Activated CD4-positive, alpha-beta memory T cell treated with anti-CD3 and anti-CD28 coated beads, Interleukin-2, amount 10 ng/mL, durations not matched to agents 7 days and 5 days (primary cell): ENCODE measurements at regions of chr10 and their contacts with region 1.

Region 1: GRCh38 chr10:124719213-124719851 is 24.8 kb downstream of the FAM53B start:
- DNase-seq: peak; percentile 79
- H3K4me3 Mint-ChIP-seq: peak overlapping the region; percentile 72
- H3K27ac Mint-ChIP-seq: peak overlapping the region; percentile 92
- H3K4me1 Mint-ChIP-seq: peaks cover 94% of the 10 kb centered on the region
- H3K27me3 Mint-ChIP-seq: no peaks in the 10 kb centered on the region

Region 2: DNA sequence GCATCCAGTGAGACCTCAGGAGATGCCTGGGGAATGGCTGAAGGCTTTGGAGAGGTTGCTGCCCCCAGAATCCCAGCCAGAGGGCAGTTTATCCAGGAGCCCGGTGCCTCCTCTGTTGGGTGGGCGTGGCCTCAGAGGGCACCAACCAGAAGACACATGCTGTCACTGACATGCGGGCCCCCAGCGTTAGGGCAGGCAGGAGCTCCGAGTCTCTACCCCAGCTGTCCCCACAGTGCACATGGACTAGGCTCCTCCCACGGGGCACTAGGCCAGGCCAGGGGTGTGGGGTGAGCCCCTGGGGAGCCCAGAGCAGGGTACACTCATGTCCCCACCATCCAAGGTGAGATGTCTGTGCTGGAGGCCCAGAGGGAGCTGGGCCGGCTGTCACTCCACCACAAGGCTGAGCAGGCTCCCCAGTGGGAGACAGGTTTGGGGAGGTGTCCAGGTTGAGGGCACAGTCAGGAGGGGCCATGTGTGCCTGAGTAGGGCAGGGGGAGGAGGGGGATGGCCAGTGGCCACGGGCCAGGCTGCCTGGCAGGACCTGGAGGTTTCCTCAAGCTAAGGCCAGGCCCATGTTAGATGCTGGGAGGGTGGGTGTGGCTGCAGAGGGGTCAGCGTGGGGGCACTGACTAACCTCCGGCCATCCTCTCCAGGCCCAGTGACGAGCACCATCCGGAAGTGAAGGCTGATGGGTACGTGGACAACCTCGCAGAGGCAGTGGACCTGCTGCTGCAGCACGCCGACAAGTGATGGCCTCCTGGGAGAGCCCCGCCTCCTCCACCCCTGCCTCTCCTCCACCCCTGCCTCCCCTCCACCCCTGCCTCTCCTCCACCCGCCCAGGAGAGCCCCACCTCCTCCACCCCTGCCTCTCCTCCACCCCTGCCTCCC is 106.5 kb before region 1 on chr10:
- CTCF ChIA-PET with region 1: interaction called, 4 read pairs
- POLR2A ChIA-PET with region 1: interaction called, 10 read pairs
- DNase-seq: peak; percentile 25
- H3K4me3 Mint-ChIP-seq: no peak overlapping the region
- H3K27ac Mint-ChIP-seq: peak overlapping the region; percentile 38
- H3K4me1 Mint-ChIP-seq: peaks cover 49% of the 10 kb centered on the region
- H3K27me3 Mint-ChIP-seq: peaks cover 2% of the 10 kb centered on the region

Region 3: GRCh38 chr10:124641282-124642087 is 77.8 kb before region 1 on chr10:
- CTCF ChIA-PET with region 1: interaction called, 3 read pairs
- POLR2A ChIA-PET with region 1: interaction called, 89 read pairs
- DNase-seq: peak; percentile 59
- H3K4me3 Mint-ChIP-seq: peak overlapping the region; percentile 54
- H3K27ac Mint-ChIP-seq: peak overlapping the region; percentile 94
- H3K4me1 Mint-ChIP-seq: peaks cover 83% of the 10 kb centered on the region
- H3K27me3 Mint-ChIP-seq: no peaks in the 10 kb centered on the region

Region 4: GRCh38 chr10:124657806-124658205 is 61.5 kb before region 1 on chr10:
- CTCF ChIA-PET with region 1: interaction called, 21 read pairs
- POLR2A ChIA-PET with region 1: interaction called, 8 read pairs
- DNase-seq: peak; percentile 62
- H3K4me3 Mint-ChIP-seq: peak overlapping the region; percentile 39
- H3K27ac Mint-ChIP-seq: peak overlapping the region; percentile 79
- H3K4me1 Mint-ChIP-seq: peaks cover 75% of the 10 kb centered on the region
- H3K27me3 Mint-ChIP-seq: no peaks in the 10 kb centered on the region

Region 5: GRCh38 chr10:124677749-124678556 is 41.4 kb before region 1 on chr10:
- CTCF ChIA-PET with region 1: interaction called, 20 read pairs
- POLR2A ChIA-PET with region 1: interaction called, 270 read pairs
- DNase-seq: no peak
- H3K4me3 Mint-ChIP-seq: no peak overlapping the region
- H3K27ac Mint-ChIP-seq: peak overlapping the region; percentile 91
- H3K4me1 Mint-ChIP-seq: peaks cover 68% of the 10 kb centered on the region
- H3K27me3 Mint-ChIP-seq: no peaks in the 10 kb centered on the region

Region 6: DNA sequence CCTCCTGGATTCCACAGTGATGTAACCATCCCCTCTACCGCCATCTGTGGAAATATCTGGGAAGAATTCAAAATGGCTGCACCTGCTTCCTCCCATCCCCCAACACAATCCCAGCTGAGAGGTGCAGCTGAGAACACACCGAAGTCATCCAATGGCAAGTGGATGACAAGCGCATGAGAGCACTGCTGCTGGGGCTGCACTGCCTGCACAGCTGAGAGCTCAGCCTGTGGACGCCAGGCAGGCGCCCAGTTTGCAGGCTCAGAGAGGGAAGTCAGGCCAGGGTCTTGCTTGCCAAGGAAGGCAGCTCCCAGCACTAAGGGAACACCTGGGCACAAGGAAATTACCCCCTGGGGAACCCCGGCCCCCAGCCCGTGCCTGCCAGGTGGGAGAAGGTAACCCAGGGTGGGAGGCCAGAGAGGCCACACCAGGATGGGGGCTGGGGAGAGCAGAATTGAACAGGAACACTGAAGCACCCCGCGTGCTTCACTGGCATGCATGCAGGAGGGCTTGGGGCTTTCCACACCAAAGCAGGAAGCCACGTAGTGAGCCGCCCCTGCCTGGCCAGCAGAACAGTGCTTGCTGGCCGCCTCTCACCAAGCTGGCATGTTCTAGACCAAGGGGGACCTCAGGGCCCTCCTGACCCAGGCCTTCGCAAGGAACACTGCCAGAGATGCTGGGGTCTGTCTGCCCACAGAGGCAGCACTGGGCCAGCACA is 21.3 kb before region 1 on chr10:
- CTCF ChIA-PET with region 1: interaction called, 162 read pairs
- POLR2A ChIA-PET with region 1: interaction called, 460 read pairs
- DNase-seq: peak; percentile 57
- H3K4me3 Mint-ChIP-seq: no peak overlapping the region
- H3K27ac Mint-ChIP-seq: peak overlapping the region; percentile 96
- H3K4me1 Mint-ChIP-seq: peaks cover 98% of the 10 kb centered on the region
- H3K27me3 Mint-ChIP-seq: no peaks in the 10 kb centered on the region